Sigmoid colon (tissue), 7 donors: ENCODE measurements at regions of chr12 and their contacts with region 1.

Region 1: DNA sequence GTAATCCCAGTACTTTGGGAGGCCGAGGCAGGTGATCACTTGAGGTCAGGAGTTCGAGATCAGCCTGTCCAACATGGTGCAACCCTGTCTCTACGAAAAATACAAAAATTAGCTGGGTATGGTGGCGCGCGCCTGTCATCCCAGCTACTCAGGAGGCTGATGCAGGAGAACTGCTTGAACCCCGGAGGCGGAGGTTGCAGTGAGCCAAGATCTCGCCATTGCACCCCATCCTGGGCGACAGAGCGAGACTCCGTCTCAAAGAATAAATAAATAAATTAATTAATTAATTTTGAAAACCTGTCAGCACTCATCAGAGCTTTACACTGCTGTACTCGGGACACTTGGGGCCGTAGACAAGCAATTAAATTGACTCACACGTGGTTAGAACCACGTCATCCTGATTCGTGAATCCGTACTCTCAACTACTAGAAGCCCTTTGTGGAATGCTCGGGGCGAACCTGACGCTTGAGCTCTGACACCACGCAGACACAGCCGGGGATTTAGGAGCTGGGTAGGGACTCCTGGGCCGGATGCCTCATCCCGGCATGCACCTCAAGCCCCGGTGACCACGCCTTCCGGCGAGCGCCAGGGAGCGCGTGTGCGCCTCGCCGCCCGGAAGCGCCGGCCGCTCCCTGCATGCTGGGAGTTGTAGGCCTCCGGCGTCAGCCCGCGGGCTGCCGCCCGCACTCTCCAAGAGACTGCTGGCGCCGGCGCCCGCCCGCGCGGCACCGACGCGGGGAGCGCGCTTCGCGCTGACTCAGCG is at the start of gene XPOT:
- DNase-seq: peak; percentile 97
- H3K4me3 ChIP-seq: peak within 1 kb of the TSS; percentile 85 to 97 (median 94)
- H3K27ac ChIP-seq: peak within 1 kb of the TSS; percentile 96 to 100 (median 98)
- H3K4me1 ChIP-seq: peaks cover 0 to 21% (median 11%) of the 10 kb centered on the region in 4 donors
- H3K27me3 ChIP-seq: no peaks in the 10 kb centered on the region
- CTCF ChIP-seq: no peak
- EP300 ChIP-seq: peak in 2 of 4 donors; percentile 39 to 62
- POLR2A ChIP-seq: no peak
- total RNA-seq, gene XPOT: 26.9 to 33.4 (median 30.1) TPM

Region 2: GRCh38 chr12:63779498-63780481 is 624.1 kb before region 1 on chr12 and contains the start of gene RXYLT1:
- intact Hi-C with region 1: loop called (anchors 5 kb)
- DNase-seq: peak; percentile 92
- H3K4me3 ChIP-seq: peak within 1 kb of the TSS; percentile 68 to 82 (median 74)
- H3K27ac ChIP-seq: peak within 1 kb of the TSS; percentile 90 to 92 (median 91)
- H3K4me1 ChIP-seq: peaks cover 0 to 22% (median 13%) of the 10 kb centered on the region in 4 donors
- H3K27me3 ChIP-seq: no peaks in the 10 kb centered on the region
- CTCF ChIP-seq: no peak
- EP300 ChIP-seq: no peak
- POLR2A ChIP-seq: peak in 1 of 2 donors; percentile 34
- total RNA-seq, gene RXYLT1: 12.1 to 17.0 (median 15.3) TPM

Region 3: DNA sequence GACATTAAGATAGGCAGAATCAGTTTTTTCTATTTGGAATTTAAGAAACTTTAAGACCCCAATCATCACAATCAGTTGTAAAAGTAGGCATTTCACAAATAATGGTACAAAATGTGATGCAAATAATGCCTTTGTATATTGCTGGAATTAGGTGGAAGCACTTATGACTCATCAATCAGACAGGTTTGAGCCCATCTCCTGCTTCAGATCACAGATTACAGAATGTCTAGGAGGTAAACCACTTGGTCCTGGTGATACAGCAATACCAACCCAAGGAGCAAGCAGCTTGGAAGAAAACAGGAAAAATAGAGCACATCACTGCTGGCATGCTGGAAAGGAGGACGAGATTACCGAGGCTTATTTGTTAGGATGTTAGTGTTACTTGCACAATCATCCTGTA is 71.0 kb before region 1 on chr12:
- intact Hi-C with region 1: no loop called
- DNase-seq: no peak
- H3K4me3 ChIP-seq: no peak overlapping the region
- H3K27ac ChIP-seq: no peak overlapping the region
- H3K4me1 ChIP-seq: no peaks in the 10 kb centered on the region
- H3K27me3 ChIP-seq: no peaks in the 10 kb centered on the region
- CTCF ChIP-seq: no peak
- EP300 ChIP-seq: no peak
- POLR2A ChIP-seq: no peak

Region 4: DNA sequence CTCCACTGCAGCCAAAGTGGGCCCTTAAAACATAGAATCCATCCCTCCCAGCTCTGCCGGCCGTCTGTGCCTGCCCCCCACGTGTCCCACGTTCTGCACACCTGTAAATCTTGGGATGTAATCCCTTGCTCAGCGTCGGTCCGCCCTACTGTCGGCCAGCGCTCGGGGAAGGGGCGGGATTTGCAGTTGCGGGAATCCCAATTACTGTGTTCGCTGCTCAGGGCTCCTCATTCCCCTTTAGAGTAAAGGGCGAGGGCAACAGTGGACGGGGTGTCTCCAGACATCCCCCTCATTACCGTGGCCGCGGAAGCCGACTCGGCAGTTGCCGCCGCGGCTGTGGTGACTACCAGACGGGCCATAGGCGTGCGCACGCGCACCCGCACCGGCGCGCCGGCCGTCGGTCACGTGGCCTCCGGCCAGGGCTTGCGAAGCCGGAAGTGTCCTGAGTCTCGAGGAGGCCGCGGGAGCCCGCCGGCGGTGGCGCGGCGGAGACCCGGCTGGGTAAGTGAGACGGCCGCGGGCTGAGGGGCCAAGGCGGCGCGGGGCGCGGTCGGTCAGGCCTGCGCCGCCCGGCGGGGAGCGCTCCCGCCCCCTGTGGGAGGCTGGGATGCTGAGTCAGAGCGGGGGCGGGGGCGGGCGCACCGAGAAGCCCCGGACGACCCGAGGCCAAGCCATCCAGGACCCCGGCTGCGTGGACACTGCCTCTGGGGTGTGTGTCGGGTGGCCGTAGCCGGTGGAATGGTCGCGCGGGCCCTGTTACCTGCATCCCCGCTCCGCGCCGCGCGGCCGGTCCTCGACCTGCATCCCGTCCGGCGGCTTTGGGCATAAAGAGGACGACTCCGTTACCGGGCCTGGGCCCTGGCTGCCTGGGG is 48.0 kb after region 1 on chr12 and contains the start of gene TBK1:
- intact Hi-C with region 1: loop called (anchors 2 kb)
- DNase-seq: peak; percentile 95
- H3K4me3 ChIP-seq: peak within 1 kb of the TSS; percentile 90 to 99 (median 96)
- H3K27ac ChIP-seq: peak within 1 kb of the TSS; percentile 97 to 100 (median 98)
- H3K4me1 ChIP-seq: peaks cover 0 to 30% (median 15%) of the 10 kb centered on the region in 4 donors
- H3K27me3 ChIP-seq: no peaks in the 10 kb centered on the region
- CTCF ChIP-seq: peak in 1 of 4 experiments; percentile 20
- EP300 ChIP-seq: no peak
- POLR2A ChIP-seq: no peak
- total RNA-seq, gene TBK1: 23.5 to 30.0 (median 27.7) TPM